Right cardiac atrium (tissue), 5 donors: ENCODE measurements at regions of chr2 and their contacts with region 1.

Region 1: GRCh38 chr2:237558906-237559641 is 7.3 kb upstream of the PRLH start:
- DNase-seq: peak; percentile 72 to 87 (median 81)
- ATAC-seq: peak; percentile 32 to 51
- H3K4me3 ChIP-seq: no peak overlapping the region
- H3K27ac ChIP-seq: no peak overlapping the region
- H3K4me1 ChIP-seq: peaks cover 8% of the 10 kb centered on the region
- H3K27me3 ChIP-seq: no peaks in the 10 kb centered on the region

Region 2: GRCh38 chr2:237421542-237422116 is 137.4 kb before region 1 on chr2:
- intact Hi-C with region 1: loop called in 1 of 4 experiments (anchors 10 kb)
- DNase-seq: peak; percentile 83 to 92 (median 90)
- ATAC-seq: peak; percentile 83 to 90
- H3K4me3 ChIP-seq: peak overlapping the region; percentile 16
- H3K27ac ChIP-seq: no peak overlapping the region
- H3K4me1 ChIP-seq: peaks cover 3% of the 10 kb centered on the region
- H3K27me3 ChIP-seq: no peaks in the 10 kb centered on the region

Region 3: DNA sequence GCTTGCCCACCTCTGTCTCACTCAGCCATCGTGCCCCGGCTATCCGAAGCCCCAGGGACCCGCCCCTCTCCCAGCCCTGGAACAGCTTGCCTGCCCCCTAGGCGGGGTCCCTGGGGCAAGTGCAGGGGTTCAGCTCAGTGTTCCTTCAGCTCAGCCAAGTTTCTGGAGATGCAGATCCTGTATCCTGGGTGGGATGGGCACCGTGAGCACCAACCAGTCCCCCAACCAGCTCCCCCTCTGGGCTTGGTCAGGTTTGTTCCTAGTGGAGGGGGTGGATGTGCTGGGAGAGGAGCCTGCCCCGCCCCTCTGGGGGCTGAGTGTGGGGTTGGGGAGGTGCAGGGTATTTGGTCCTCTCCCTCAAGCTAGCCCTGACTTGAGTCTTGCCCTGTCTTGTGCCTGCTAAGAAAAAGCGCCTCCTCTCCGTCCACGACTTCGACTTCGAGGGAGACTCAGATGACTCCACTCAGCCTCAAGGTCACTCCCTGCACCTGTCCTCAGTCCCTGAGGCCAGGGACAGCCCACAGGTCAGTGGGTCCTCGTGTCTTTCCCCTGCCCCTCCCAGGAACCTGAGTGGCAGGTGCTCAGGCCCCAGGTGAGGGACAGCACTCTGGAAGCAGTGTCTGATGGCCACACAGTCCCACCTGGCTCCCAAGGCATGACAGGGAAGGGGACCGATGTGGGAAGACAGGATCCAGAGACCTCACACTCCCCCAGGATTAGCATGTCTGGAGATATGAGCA is 39.4 kb before region 1 on chr2:
- intact Hi-C with region 1: loop called in 1 of 4 experiments (anchors 2 kb)
- DNase-seq: no peak
- ATAC-seq: no peak
- H3K4me3 ChIP-seq: no peak overlapping the region
- H3K27ac ChIP-seq: no peak overlapping the region
- H3K4me1 ChIP-seq: peaks cover 2% of the 10 kb centered on the region
- H3K27me3 ChIP-seq: no peaks in the 10 kb centered on the region